WTC11 (cell line): ENCODE measurements at regions of chr13 and their contacts with region 1.

Region 1: GRCh38 chr13:35789335-35790165 is 313.1 kb upstream of the MAB21L1 start:
- DNase-seq: no peak
- ATAC-seq: peak; percentile 87
- H3K4me3 Mint-ChIP-seq: no peak overlapping the region
- H3K27ac Mint-ChIP-seq: no peak overlapping the region
- H3K4me1 Mint-ChIP-seq: peaks cover 9% of the 10 kb centered on the region
- H3K27me3 Mint-ChIP-seq: no peaks in the 10 kb centered on the region
- CTCF ChIP-seq: no peak

Region 2: DNA sequence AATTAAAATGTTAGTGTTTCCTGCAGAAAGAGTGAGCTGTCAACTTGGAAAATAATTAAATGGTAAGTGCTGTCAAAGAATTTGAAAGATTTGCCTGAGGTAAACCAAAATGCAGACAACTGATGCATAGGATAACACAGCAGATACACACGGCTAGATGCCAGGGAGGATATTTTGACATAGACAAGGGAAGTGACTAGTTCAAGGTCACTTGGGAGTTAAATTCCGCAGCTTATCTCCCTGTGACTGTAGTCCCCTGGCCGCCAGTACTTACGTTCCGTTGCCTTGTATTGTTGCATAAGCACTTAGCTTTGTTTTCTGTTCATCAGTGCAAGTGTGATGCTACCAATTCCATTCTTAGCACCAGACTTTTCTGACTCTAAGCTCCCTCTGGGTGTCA is 65.7 kb before region 1 on chr13:
- CTCF ChIA-PET with region 1: interaction called, 22 read pairs
- POLR2A ChIA-PET with region 1: no interaction called
- DNase-seq: no peak
- ATAC-seq: no peak
- H3K4me3 Mint-ChIP-seq: no peak overlapping the region
- H3K27ac Mint-ChIP-seq: no peak overlapping the region
- H3K4me1 Mint-ChIP-seq: peaks cover 8% of the 10 kb centered on the region; the same call in 1 of the 2 replicates
- H3K27me3 Mint-ChIP-seq: no peaks in the 10 kb centered on the region
- CTCF ChIP-seq: no peak

Region 3: GRCh38 chr13:35818633-35819067 is 29.1 kb after region 1 on chr13:
- CTCF ChIA-PET with region 1: interaction called, 16 read pairs
- POLR2A ChIA-PET with region 1: no interaction called
- DNase-seq: no peak
- ATAC-seq: no peak
- H3K4me3 Mint-ChIP-seq: no peak overlapping the region
- H3K27ac Mint-ChIP-seq: peak overlapping the region; percentile 83; the same call in 1 of the 2 replicates
- H3K4me1 Mint-ChIP-seq: peaks cover 11% of the 10 kb centered on the region
- H3K27me3 Mint-ChIP-seq: no peaks in the 10 kb centered on the region
- CTCF ChIP-seq: peak; percentile 57

Region 4: DNA sequence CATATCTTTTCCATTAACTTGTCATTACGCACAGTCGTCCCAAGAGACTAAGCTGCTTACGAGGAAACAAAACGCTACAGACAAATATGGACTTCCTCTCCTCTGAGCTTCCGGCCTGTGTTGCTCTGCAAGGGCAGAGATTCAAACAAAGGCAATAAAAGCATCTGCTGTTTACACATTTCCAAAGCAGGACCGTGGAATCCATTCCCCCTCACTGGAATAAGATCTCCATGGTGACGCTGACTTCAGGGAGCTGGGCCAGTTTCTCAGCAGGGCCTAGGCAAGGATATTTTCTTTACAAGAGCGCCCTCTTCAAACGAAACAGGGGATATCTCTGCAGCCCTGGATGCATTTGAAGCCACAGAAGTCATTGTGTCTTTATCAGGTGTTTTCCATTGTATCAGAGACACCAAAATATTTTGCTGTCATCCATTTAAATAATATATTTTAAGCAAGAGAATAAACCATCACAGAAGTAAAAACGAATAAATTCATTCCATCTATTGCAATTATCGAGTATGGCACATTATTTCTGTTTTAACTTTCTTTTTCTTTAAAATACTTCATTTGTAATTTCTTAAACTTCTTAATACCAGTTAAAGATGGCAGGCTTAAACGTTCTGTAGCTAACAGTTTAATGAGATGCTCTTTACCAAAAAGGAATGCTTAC is 164.1 kb after region 1 on chr13:
- CTCF ChIA-PET with region 1: interaction called, 16 read pairs
- POLR2A ChIA-PET with region 1: no interaction called
- DNase-seq: peak; percentile 53
- ATAC-seq: peak; percentile 99
- H3K4me3 Mint-ChIP-seq: peak overlapping the region; percentile 16; the same call in 1 of the 2 replicates
- H3K27ac Mint-ChIP-seq: peak overlapping the region; percentile 90; the same call in 1 of the 2 replicates
- H3K4me1 Mint-ChIP-seq: peaks cover 3% of the 10 kb centered on the region
- H3K27me3 Mint-ChIP-seq: no peaks in the 10 kb centered on the region
- CTCF ChIP-seq: no peak

Region 5: DNA sequence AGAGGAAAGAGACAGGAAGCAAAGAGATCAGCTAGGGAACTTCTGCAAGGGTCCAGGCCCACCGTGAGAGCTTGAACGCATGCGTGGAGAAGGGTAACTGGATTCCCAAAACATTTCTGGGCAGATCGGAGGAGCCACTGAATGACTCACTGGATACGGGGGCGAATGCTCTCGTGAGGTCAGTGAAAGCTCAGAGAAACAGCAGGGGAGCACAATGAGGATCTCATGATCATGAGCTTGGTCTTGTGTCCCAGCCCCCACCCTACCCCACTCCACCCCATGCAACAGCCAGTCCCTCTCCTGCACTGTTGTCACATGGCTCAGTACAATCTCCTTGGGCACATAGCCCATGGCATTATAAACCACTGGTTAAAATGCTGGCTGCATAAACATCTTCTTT is 301.0 kb after region 1 on chr13:
- CTCF ChIA-PET with region 1: no interaction called
- POLR2A ChIA-PET with region 1: no interaction called
- DNase-seq: no peak
- ATAC-seq: no peak
- H3K4me3 Mint-ChIP-seq: no peak overlapping the region
- H3K27ac Mint-ChIP-seq: no peak overlapping the region
- H3K4me1 Mint-ChIP-seq: peaks cover 6% of the 10 kb centered on the region
- H3K27me3 Mint-ChIP-seq: no peaks in the 10 kb centered on the region
- CTCF ChIP-seq: no peak